Gastrocnemius medialis (tissue), 4 donors: ENCODE measurements at regions of chr9 and their contacts with region 1.

Region 1: DNA sequence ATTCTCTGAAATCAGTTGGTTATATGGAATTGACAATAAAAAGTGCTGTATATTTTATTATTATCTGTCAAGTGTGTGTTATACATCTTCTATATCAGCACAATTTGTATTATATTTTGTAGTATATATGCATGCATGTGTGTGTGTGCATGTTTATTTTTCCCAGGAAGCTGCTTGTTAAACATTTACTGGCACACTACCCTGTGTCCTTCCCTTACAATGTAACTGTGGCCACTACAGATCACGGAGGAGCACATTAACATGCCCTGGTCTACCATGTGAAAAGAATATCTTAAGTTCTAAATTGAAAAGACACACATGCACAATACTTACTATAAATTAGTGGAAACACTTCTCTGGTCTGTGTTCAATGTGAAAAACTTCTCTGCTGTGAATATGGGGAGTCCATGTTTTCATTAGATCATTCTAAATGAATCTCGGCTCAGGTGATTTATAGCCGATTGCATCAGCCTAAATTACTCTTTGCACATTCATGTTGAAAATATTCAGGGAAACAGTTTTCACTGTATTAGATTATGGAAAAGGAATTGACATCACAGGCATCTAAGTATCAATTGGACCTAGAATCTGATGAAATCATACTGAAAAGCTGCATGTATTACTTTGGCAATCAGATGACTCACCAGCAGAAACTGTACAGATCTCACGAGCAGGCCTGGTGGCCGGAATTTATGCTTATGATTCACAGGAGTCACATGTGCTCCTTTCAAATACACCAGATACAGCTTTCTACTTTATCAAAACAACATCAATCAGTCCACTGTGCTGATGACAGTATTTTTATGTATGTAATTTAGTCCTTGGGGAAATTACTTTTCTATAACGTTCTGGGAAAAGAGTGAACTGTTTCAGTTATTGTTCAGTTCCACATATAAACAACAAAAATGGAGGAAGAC is 39.4 kb downstream of the LURAP1L start:
- DNase-seq: peak; percentile 11 to 56
- ATAC-seq: peak; percentile 86 to 96
- H3K4me3 ChIP-seq: peak overlapping the region in 2 of 4 donors; percentile 5 to 32
- H3K27ac ChIP-seq: peak overlapping the region; percentile 66 to 76 (median 70)
- H3K4me1 ChIP-seq: peaks cover 16 to 24% of the 10 kb centered on the region in 2 donors
- H3K27me3 ChIP-seq: no peaks in the 10 kb centered on the region
- CTCF ChIP-seq: peak in 4 of 5 experiments; percentile 10 to 33 (median 26)
- POLR2A ChIP-seq: no peak

Region 2: DNA sequence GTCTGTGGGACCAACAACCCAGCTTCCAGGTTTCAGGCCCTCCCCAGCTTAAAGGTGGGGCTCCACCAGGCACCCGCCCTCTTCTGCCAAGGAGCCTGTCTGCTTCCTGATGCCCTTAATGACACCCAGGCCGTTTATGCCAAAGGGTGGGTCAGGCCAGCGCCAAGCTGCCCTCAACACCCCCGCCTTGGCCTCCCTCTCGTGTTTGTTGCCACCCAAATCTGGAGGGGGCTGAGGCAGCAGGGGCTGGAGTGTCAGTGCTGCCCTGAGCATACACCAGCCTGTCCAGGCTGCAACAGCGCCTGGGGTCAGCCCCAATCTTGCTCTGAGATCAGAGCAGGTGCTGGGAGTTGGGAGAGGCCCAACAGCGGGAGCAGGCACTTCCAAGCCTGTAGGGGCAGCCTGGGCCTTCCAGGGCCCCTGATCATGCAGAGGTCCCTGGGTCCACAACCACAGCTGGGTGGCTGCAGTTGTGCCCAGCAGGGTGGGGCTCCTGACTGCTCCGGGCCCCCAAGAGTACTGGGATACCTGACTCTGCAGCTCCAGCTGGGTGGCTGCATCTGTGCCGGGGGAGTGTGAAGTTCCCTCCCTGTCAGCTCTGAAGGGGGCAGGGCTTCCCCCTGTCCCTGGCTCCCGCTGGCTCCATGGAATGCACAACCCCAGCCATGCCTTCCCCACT is 155.5 kb before region 1 on chr9:
- in situ Hi-C with region 1: no loop called
- intact Hi-C with region 1: no loop called
- DNase-seq: no peak
- ATAC-seq: no peak
- H3K4me3 ChIP-seq: no peak overlapping the region
- H3K27ac ChIP-seq: no peak overlapping the region
- H3K4me1 ChIP-seq: no peaks in the 10 kb centered on the region
- H3K27me3 ChIP-seq: no peaks in the 10 kb centered on the region
- CTCF ChIP-seq: no peak
- POLR2A ChIP-seq: no peak

Region 3: GRCh38 chr9:12702160-12702758 is 112.0 kb before region 1 on chr9:
- in situ Hi-C with region 1: loop called in 1 of 4 experiments (anchors 25 kb)
- intact Hi-C with region 1: no loop called
- DNase-seq: peak in 1 of 2 donors; percentile 19
- ATAC-seq: peak; percentile 55 to 65
- H3K4me3 ChIP-seq: no peak overlapping the region
- H3K27ac ChIP-seq: no peak overlapping the region
- H3K4me1 ChIP-seq: peaks cover 0 to 9% of the 10 kb centered on the region in 2 donors
- H3K27me3 ChIP-seq: no peaks in the 10 kb centered on the region
- CTCF ChIP-seq: peak in 3 of 5 experiments; percentile 24 to 44 (median 40)
- POLR2A ChIP-seq: no peak

Region 4: GRCh38 chr9:12775679-12776512 is 38.3 kb before region 1 on chr9:
- in situ Hi-C with region 1: no loop called
- intact Hi-C with region 1: loop called (anchors 2 kb)
- DNase-seq: peak in 1 of 2 donors; percentile 13
- ATAC-seq: peak; percentile 72 to 78
- H3K4me3 ChIP-seq: peak overlapping the region; percentile 67 to 85 (median 76)
- H3K27ac ChIP-seq: peak overlapping the region; percentile 71 to 83 (median 78)
- H3K4me1 ChIP-seq: peaks cover 5 to 8% of the 10 kb centered on the region in 2 donors
- H3K27me3 ChIP-seq: no peaks in the 10 kb centered on the region
- CTCF ChIP-seq: peak in 2 of 5 experiments; percentile 42 to 44
- POLR2A ChIP-seq: peak in 1 of 2 donors; percentile 26